Activated B cell treated with CpG ODN at 0.5 μM for 24 hours (primary cell): ENCODE measurements at regions of chr20 and their contacts with region 1.

Region 1: DNA sequence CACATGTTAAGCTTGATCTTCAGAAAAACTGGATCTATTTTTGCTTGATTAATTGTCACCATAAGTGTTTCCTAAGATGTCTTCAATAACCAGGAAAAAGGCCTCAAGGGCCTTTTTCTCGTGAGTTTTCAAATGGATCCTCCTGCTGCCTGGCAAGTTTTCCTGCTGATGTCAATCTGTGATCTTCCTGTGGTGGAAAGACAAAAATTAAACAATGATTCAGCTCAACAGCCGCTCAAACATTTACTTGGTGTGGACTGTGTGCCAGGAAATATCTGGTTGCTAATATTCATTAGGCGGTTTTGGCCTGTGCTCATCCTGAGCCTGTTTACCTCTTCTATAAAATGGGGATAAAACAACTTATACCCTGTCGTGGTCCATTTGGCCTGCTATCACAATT is 35.4 kb upstream of the SSTR4 start:
- DNase-seq: no peak
- ATAC-seq: no peak
- H3K4me3 Mint-ChIP-seq: no peak overlapping the region
- H3K27ac Mint-ChIP-seq: no peak overlapping the region
- H3K4me1 Mint-ChIP-seq: no peaks in the 10 kb centered on the region
- H3K27me3 Mint-ChIP-seq: peaks cover 3% of the 10 kb centered on the region
- CTCF ChIP-seq: no peak

Region 2: DNA sequence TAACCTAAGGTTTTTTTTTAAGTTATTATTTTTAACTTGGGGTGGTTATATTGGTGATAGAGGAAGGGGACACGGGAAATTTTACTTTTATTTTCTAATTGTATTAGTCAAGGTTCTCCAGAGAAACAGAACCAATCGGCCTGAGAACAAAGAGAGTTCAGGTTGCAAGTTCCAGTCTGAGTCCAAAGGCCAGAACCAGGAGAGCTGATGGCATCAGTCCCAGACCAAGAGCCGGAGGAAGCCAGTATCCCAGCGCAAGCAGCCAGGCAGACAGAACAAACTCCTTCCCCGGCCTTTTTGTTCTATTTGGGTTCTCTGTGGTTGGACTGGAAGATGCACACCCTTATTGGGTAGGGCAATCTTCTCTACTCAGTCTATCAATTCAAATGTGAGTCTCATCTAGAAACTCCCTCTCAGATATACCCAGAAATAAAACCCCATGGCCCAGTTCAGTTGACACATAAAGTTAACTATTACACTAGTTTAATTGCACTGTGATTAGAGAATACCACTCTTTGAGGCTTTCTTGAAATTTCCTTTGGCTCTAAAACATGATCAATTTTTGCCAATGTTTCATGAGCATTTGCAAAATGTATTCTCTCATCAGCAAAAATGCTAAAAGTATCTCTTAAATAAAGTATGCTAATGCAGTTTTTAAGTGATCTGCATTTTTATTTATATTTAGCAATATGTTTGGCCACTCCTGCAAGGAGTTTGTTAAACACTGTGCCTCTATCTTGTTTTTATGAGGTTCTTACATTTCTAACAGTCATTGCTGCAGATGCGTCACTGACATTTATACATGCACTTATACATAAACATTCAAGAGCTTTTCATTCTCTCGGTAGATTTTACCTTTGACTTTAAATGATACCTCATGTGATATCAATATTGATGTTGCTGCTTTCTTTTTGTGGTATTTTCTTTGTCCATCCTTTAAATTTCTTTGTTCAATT is 67.8 kb before region 1 on chr20:
- CTCF ChIA-PET with region 1: no interaction called
- POLR2A ChIA-PET with region 1: no interaction called
- intact Hi-C with region 1: loop called (anchors 10 kb)
- DNase-seq: no peak
- ATAC-seq: no peak
- H3K4me3 Mint-ChIP-seq: no peak overlapping the region
- H3K27ac Mint-ChIP-seq: no peak overlapping the region
- H3K4me1 Mint-ChIP-seq: no peaks in the 10 kb centered on the region
- H3K27me3 Mint-ChIP-seq: no peaks in the 10 kb centered on the region
- CTCF ChIP-seq: no peak